Tibial artery (tissue), 4 donors: ENCODE measurements at regions of chr1 and their contacts with region 1.

Region 1: GRCh38 chr1:22641906-22642636 is 1.4 kb upstream of the C1QC start:
- DNase-seq: peak; percentile 79 to 87
- H3K4me3 ChIP-seq: no peak overlapping the region
- H3K27ac ChIP-seq: no peak overlapping the region
- H3K4me1 ChIP-seq: peaks cover 0 to 7% (median 2%) of the 10 kb centered on the region in 4 donors
- H3K27me3 ChIP-seq: peaks cover 0 to 72% of the 10 kb centered on the region in 2 donors
- CTCF ChIP-seq: peak; percentile 96

Region 2: GRCh38 chr1:22420455-22421053 is 221.5 kb before region 1 on chr1:
- intact Hi-C with region 1: loop called (anchors 2 kb)
- DNase-seq: peak; percentile 82 to 85
- H3K4me3 ChIP-seq: no peak overlapping the region
- H3K27ac ChIP-seq: no peak overlapping the region
- H3K4me1 ChIP-seq: peaks cover 0 to 6% (median 0%) of the 10 kb centered on the region in 4 donors
- H3K27me3 ChIP-seq: peaks cover 0 to 53% of the 10 kb centered on the region in 2 donors
- CTCF ChIP-seq: peak; percentile 82 to 90

Region 3: GRCh38 chr1:22527555-22528296 is 114.3 kb before region 1 on chr1:
- intact Hi-C with region 1: loop called (anchors 10 kb)
- DNase-seq: peak; percentile 11 to 33
- H3K4me3 ChIP-seq: no peak overlapping the region
- H3K27ac ChIP-seq: peak overlapping the region in 1 of 2 donors; percentile 35
- H3K4me1 ChIP-seq: peaks cover 0 to 23% (median 19%) of the 10 kb centered on the region in 4 donors
- H3K27me3 ChIP-seq: no peaks in the 10 kb centered on the region
- CTCF ChIP-seq: no peak